GM12878 (cell line): ENCODE measurements at regions of chr2 and their contacts with region 1.

Region 1: GRCh38 chr2:119659601-119660342 is 19.2 kb upstream of the TMEM177 start:
- DNase-seq: no peak
- ATAC-seq: peak; percentile 75
- H3K4me3 ChIP-seq: no peak overlapping the region
- H3K27ac ChIP-seq: no peak overlapping the region
- H3K4me1 ChIP-seq: no peaks in the 10 kb centered on the region
- H3K27me3 ChIP-seq: no peaks in the 10 kb centered on the region; a peak in 1 of 4 replicates
- CTCF ChIP-seq: peak; percentile 78 to 85 (median 84)
- EP300 ChIP-seq: no peak
- POLR2A ChIP-seq: no peak
- RAD21 ChIP-seq: peak; percentile 76

Region 2: GRCh38 chr2:118709786-118710185 is 950.0 kb before region 1 on chr2:
- CTCF ChIA-PET with region 1: no interaction called
- POLR2A ChIA-PET with region 1: no interaction called
- RAD21 ChIA-PET with region 1: no interaction called
- SMC1A ChIA-PET with region 1: no interaction called
- in situ Hi-C with region 1: no loop called
- intact Hi-C with region 1: no loop called
- DNase-seq: no peak
- ATAC-seq: no peak
- H3K4me3 ChIP-seq: no peak overlapping the region
- H3K27ac ChIP-seq: no peak overlapping the region
- H3K4me1 ChIP-seq: no peaks in the 10 kb centered on the region
- H3K27me3 ChIP-seq: no peaks in the 10 kb centered on the region
- CTCF ChIP-seq: no peak
- EP300 ChIP-seq: no peak
- POLR2A ChIP-seq: no peak
- RAD21 ChIP-seq: no peak

Region 3: GRCh38 chr2:119407430-119408220 is 252.1 kb before region 1 on chr2:
- CTCF ChIA-PET with region 1: no interaction called
- POLR2A ChIA-PET with region 1: no interaction called
- RAD21 ChIA-PET with region 1: no interaction called
- SMC1A ChIA-PET with region 1: interaction called, 3 read pairs
- in situ Hi-C with region 1: loop called (anchors 5 kb)
- intact Hi-C with region 1: loop called (anchors 2 kb)
- DNase-seq: peak; percentile 32
- ATAC-seq: peak; percentile 91
- H3K4me3 ChIP-seq: no peak overlapping the region
- H3K27ac ChIP-seq: no peak overlapping the region
- H3K4me1 ChIP-seq: no peaks in the 10 kb centered on the region
- H3K27me3 ChIP-seq: no peaks in the 10 kb centered on the region
- CTCF ChIP-seq: peak; percentile 67 to 88 (median 73)
- EP300 ChIP-seq: no peak
- POLR2A ChIP-seq: no peak
- RAD21 ChIP-seq: peak; percentile 83

Region 4: DNA sequence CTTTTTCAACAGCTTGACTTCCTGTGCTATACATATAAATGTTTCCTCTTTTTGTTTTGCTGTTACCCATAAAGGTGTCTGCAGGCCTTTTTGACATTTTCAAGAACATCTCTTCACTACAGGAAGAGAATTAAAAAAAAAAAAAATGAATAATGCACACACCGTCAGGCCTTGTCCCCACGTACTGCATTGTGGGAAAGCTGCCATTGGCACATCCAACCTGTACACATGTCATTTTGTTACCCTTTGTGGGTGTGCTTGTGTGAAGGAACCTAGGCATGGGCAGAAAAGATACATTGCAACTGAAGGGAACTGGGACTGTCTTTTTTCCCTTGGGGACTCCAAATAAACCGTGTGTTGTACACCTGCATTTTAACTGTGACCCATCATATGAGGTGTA is 244.9 kb before region 1 on chr2:
- CTCF ChIA-PET with region 1: no interaction called
- POLR2A ChIA-PET with region 1: no interaction called
- RAD21 ChIA-PET with region 1: no interaction called
- SMC1A ChIA-PET with region 1: no interaction called
- in situ Hi-C with region 1: loop called (anchors 5 kb)
- intact Hi-C with region 1: no loop called
- DNase-seq: no peak
- ATAC-seq: no peak
- H3K4me3 ChIP-seq: no peak overlapping the region
- H3K27ac ChIP-seq: no peak overlapping the region
- H3K4me1 ChIP-seq: no peaks in the 10 kb centered on the region
- H3K27me3 ChIP-seq: no peaks in the 10 kb centered on the region
- CTCF ChIP-seq: no peak
- EP300 ChIP-seq: no peak
- POLR2A ChIP-seq: no peak
- RAD21 ChIP-seq: no peak

Region 5: GRCh38 chr2:119517433-119517832 is 142.3 kb before region 1 on chr2:
- CTCF ChIA-PET with region 1: interaction called, 8 read pairs
- POLR2A ChIA-PET with region 1: no interaction called
- RAD21 ChIA-PET with region 1: interaction called, 4 read pairs
- SMC1A ChIA-PET with region 1: no interaction called
- in situ Hi-C with region 1: no loop called
- intact Hi-C with region 1: loop called (anchors 1 kb)
- DNase-seq: no peak
- ATAC-seq: peak; percentile 98
- H3K4me3 ChIP-seq: no peak overlapping the region
- H3K27ac ChIP-seq: no peak overlapping the region
- H3K4me1 ChIP-seq: no peaks in the 10 kb centered on the region; the same call in 1 of the 2 replicates
- H3K27me3 ChIP-seq: peaks cover 0 to under 1% of the 10 kb centered on the region in 2 experiments; a peak in 2 of 4 replicates
- CTCF ChIP-seq: peak; percentile 61 to 80 (median 79)
- EP300 ChIP-seq: no peak
- POLR2A ChIP-seq: no peak
- RAD21 ChIP-seq: peak; percentile 53

Region 6: GRCh38 chr2:119641562-119642258 is 18.1 kb before region 1 on chr2:
- CTCF ChIA-PET with region 1: interaction called, 80 read pairs
- POLR2A ChIA-PET with region 1: no interaction called
- RAD21 ChIA-PET with region 1: interaction called, 9 read pairs
- SMC1A ChIA-PET with region 1: interaction called, 22 read pairs
- in situ Hi-C with region 1: no loop called
- intact Hi-C with region 1: loop called (anchors 1 kb)
- DNase-seq: peak; percentile 40
- ATAC-seq: peak; percentile 99
- H3K4me3 ChIP-seq: no peak overlapping the region
- H3K27ac ChIP-seq: no peak overlapping the region
- H3K4me1 ChIP-seq: no peaks in the 10 kb centered on the region
- H3K27me3 ChIP-seq: no peaks in the 10 kb centered on the region; a peak in 1 of 4 replicates
- CTCF ChIP-seq: peak; percentile 97
- EP300 ChIP-seq: no peak
- POLR2A ChIP-seq: no peak
- RAD21 ChIP-seq: peak; percentile 88